Cardiac septum (tissue), 1 donor: ENCODE measurements at regions of chr9 and their contacts with region 1.

Region 1: GRCh38 chr9:22008736-22009562 is at the start of gene CDKN2B:
- DNase-seq: peak; percentile 97
- total RNA-seq, gene CDKN2B: 3.6 TPM

Region 2: DNA sequence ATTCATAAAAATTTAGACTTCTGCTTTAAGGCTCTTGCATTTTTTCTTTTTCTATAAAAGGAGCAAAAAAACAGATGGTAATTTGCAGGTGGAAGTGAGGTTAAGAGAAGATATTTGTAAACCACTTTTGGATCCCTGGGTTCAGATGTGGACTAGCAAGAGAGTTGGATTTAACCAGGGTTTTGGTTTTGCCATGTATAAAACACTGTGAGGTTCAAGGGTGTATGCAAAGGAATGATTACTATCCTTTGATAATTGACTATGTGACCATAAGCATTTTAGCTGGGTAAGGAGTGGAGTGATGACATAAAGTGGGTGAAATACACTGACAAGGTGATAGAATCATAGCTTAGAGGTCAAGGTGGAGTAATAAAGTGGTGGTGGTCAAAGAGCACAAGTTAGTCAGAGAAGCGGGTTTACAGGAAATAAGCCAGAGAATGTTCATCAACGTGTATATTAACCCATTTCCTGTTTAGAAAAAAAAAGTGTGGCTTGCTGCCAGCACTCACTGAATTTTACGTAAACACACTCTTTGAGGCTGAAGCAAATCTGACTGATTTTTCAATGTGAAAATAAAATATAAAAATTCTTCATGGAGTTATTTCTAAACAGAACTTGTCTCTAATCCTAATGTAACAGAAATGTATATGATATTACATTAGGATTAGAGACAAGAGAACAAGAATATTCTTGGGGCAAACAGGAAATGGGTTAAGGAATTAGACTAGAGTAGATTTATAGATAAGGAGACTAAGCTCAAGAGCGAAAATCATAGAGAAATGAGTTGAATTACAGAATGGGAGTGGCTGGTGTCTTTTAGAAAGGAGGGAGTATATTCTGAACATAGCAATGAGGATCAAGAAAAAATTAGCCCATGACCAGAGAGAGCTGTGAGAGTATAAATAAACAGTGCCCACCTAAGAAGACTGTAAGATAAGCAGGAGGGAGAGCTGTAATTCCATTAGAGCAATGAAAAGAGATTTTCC is 89.3 kb before region 1 on chr9:
- intact Hi-C with region 1: no loop called
- DNase-seq: no peak

Region 3: DNA sequence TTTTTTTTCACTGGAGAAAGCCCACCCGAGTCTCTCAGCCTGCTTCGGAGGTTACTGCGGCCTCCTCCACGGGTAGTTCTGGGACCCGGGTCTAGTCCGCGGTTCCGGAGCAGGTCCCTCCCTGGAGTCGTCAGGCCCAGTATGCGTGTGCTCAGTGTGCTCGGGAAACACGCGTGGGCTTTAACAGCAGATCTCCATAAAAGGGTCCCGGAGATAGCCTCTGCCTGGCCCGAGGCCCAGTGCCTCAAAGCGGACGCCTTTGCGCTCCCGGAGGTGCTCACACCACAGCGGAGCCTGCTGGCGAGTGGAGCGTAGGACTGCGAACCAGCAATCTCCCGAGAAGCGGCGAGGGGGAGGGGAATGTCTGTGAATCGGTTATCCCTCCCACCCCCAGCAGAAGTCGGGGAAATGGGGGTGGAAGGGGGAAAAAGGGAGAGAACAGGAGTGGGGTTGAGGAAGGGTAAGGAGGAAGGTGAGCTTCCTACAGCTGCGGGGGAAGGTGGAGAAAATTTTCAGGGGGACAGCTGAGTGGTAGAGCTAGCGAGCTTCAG is 43.5 kb before region 1 on chr9:
- intact Hi-C with region 1: loop called (anchors 5 kb)
- DNase-seq: no peak

Region 4: GRCh38 chr9:22105005-22105722 is 96.2 kb after region 1 on chr9:
- intact Hi-C with region 1: loop called (anchors 10 kb)
- DNase-seq: no peak